PC-3 (cell line): ENCODE measurements at regions of chr1 and their contacts with region 1.

Region 1: GRCh38 chr1:212700892-212701819 is 1.5 kb upstream of the BATF3 start:
- DNase-seq: peak; percentile 54
- ATAC-seq: peak; percentile 72
- H3K4me3 ChIP-seq: peak overlapping the region; percentile 61
- H3K27ac ChIP-seq: no peak overlapping the region
- H3K4me1 ChIP-seq: peaks cover 18% of the 10 kb centered on the region
- H3K27me3 ChIP-seq: peaks cover 70% of the 10 kb centered on the region
- CTCF ChIP-seq: peak; percentile 40

Region 2: DNA sequence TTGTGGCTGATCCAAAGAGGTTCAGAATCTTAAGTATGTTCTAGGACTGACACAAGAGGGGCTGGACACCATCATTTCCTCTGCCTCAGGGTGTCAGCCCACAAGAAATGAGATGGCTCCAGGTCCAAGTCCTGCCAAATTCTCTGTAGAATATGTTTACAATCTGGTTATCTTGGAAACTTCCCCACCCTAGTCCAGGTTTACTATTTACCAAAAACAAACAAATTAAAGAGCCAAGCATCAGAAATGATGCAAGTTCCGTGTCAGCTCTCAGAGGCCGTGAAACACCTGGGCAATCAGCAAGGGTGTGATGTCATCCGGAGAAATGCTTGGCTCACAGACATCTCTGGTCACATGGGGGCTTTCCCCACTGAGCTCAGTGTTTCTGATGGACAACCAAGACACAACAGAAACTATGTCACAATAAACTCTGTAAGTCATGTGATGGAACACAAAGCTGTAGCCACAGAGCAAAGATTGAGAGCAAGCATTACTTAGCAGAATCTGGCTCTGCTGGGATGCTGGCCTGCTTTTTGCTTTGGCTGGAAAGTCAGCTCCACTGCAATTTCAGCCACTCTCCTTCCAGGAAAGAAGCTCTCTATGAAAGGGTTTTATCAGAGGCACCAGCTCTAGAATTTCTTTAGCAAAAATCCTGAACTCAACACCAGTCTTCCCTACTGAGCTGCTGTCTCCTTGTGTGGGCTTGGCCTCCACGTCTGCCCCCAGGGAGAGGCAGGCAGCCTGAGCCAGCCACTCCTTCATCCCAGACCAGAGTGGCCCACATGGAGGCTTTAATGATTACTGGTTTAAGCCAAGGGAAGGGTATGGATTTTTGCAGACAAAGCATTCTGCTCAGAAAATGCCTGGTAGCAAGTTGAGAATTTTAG is 212.5 kb before region 1 on chr1:
- CTCF ChIA-PET with region 1: no interaction called
- POLR2A ChIA-PET with region 1: no interaction called
- intact Hi-C with region 1: no loop called
- DNase-seq: peak; percentile 76
- ATAC-seq: no peak; the same call in 1 of the 2 replicates
- H3K4me3 ChIP-seq: no peak overlapping the region
- H3K27ac ChIP-seq: peak overlapping the region; percentile 92
- H3K4me1 ChIP-seq: peaks cover 49% of the 10 kb centered on the region
- H3K27me3 ChIP-seq: no peaks in the 10 kb centered on the region
- CTCF ChIP-seq: no peak

Region 3: DNA sequence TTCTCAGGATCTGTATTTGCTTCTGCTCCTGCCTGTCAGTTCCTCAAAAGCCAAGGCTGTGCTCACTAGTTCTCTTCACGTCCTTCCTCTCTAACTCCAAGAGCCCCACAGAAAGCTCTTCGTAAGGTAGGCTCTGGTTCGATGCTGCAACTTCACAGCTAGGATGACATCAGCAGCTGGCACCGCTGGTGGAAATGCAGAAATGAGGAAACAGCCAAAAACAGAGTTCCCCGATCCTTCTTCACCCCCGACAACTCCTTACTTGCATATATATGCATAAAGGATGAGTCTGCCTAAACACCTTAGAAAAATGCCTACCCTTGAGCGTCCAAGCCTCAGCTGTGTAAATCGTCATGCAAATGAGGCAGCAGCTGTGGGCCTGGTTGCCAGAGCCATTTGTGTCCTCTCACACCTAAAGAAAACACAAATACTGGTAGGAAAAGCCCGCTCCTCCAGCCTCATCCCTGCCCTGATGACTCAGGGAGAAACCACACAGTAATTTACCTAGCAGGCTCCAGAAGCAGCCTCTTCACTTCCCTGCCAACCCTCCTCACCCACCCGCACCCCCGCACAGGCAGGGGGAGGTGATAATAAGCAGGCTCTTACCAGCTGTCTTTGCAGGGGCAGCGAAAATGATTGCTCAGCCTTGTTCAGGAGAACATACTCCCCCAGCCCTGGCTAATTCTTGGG is 29.7 kb before region 1 on chr1:
- CTCF ChIA-PET with region 1: no interaction called
- POLR2A ChIA-PET with region 1: no interaction called
- intact Hi-C with region 1: loop called (anchors 2 kb)
- DNase-seq: peak; percentile 91
- ATAC-seq: peak; percentile 71
- H3K4me3 ChIP-seq: no peak overlapping the region
- H3K27ac ChIP-seq: peak overlapping the region; percentile 1; the same call in 1 of the 2 replicates
- H3K4me1 ChIP-seq: peaks cover 38% of the 10 kb centered on the region
- H3K27me3 ChIP-seq: no peaks in the 10 kb centered on the region
- CTCF ChIP-seq: no peak

Region 4: GRCh38 chr1:212716161-212716560 is 15.0 kb after region 1 on chr1:
- CTCF ChIA-PET with region 1: interaction called, 3 read pairs
- POLR2A ChIA-PET with region 1: no interaction called
- intact Hi-C with region 1: loop called (anchors 2 kb)
- DNase-seq: no peak
- ATAC-seq: no peak
- H3K4me3 ChIP-seq: no peak overlapping the region
- H3K27ac ChIP-seq: no peak overlapping the region
- H3K4me1 ChIP-seq: peaks cover 3% of the 10 kb centered on the region
- H3K27me3 ChIP-seq: no peaks in the 10 kb centered on the region
- CTCF ChIP-seq: no peak

Region 5: GRCh38 chr1:212738330-212738729 is 37.2 kb after region 1 on chr1:
- CTCF ChIA-PET with region 1: no interaction called
- POLR2A ChIA-PET with region 1: no interaction called
- intact Hi-C with region 1: no loop called
- DNase-seq: no peak
- ATAC-seq: no peak
- H3K4me3 ChIP-seq: no peak overlapping the region
- H3K27ac ChIP-seq: no peak overlapping the region
- H3K4me1 ChIP-seq: no peaks in the 10 kb centered on the region
- H3K27me3 ChIP-seq: no peaks in the 10 kb centered on the region
- CTCF ChIP-seq: no peak